Naive thymus-derived CD4-positive, alpha-beta T cell (primary cell): ENCODE measurements at regions of chr14 and their contacts with region 1.

Region 1: GRCh38 chr14:24215495-24216344 is at the start of gene MDP1:
- DNase-seq: peak; percentile 75 to 89 (median 84)
- ATAC-seq: peak; percentile 85
- H3K4me3 ChIP-seq: peak within 1 kb of the TSS; percentile 95
- H3K4me3 Mint-ChIP-seq: peak within 1 kb of the TSS; percentile 89 to 97 (median 95)
- H3K27ac ChIP-seq: peak within 1 kb of the TSS; percentile 91
- H3K27ac Mint-ChIP-seq: peak within 1 kb of the TSS; percentile 80 to 99 (median 96)
- H3K4me1 ChIP-seq: peaks cover 31 to 36% of the 10 kb centered on the region in 2 donors
- H3K4me1 Mint-ChIP-seq: peaks cover 29 to 62% (median 54%) of the 10 kb centered on the region in 7 donors
- H3K27me3 ChIP-seq: no peaks in the 10 kb centered on the region
- H3K27me3 Mint-ChIP-seq: peaks cover 0 to 2% (median 0%) of the 10 kb centered on the region in 5 donors
- total RNA-seq, gene MDP1: 5.5 to 18.5 (median 14.2) TPM

Region 2: GRCh38 chr14:23555882-23556699 is 659.6 kb before region 1 on chr14 and contains the start of gene THTPA:
- CTCF ChIA-PET with region 1: no interaction called
- POLR2A ChIA-PET with region 1: no interaction called
- intact Hi-C with region 1: loop called in 1 of 2 experiments (anchors 5 kb)
- DNase-seq: peak; percentile 84 to 96 (median 89)
- ATAC-seq: peak; percentile 94
- H3K4me3 ChIP-seq: peak within 1 kb of the TSS; percentile 84
- H3K4me3 Mint-ChIP-seq: peak within 1 kb of the TSS; percentile 80 to 99 (median 96)
- H3K27ac ChIP-seq: peak within 1 kb of the TSS; percentile 83
- H3K27ac Mint-ChIP-seq: peak within 1 kb of the TSS; percentile 78 to 97 (median 94)
- H3K4me1 ChIP-seq: peaks cover 10 to 16% of the 10 kb centered on the region in 2 donors
- H3K4me1 Mint-ChIP-seq: peaks cover 18 to 45% (median 38%) of the 10 kb centered on the region in 7 donors
- H3K27me3 ChIP-seq: no peaks in the 10 kb centered on the region
- H3K27me3 Mint-ChIP-seq: peaks cover 0 to under 1% (median 0%) of the 10 kb centered on the region in 5 donors
- total RNA-seq, gene THTPA: 16.4 to 26.7 (median 19.2) TPM

Region 3: DNA sequence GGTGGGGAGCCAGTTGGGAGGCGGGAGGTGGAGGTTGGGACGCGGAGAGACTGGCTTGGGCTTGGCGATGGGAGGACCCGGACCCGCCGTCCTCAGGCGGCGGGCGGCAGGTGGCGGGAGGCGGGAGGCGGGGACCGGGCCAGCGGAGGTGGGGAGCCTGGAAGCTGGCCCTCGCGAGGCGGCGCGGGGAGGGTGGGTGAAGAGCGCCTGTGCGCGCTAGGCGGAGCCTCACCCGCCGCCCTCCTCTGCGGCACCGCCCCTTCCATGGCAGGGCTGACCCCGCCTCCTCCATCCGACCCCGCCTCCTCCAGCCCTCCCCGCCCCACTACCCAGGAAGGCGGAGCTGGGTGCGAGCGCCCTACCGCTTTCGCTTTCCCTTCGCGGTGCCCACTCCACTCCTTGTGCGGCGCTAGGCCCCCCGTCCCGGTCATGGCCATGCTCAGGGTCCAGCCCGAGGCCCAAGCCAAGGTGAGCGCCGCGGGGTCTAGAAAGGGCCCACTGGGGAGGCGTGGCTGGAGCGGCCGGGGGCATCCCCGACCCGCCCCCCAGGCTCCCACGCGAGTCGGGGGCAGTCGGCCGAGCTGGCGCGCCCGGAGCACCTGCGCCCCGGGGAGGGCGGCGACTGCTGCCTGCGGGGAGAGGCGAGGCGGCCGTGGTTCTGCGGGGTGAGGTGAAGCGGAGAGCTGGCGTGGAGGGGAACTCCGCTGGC is 79.7 kb before region 1 on chr14 and contains the start of gene PSME1:
- CTCF ChIA-PET with region 1: interaction called, 3 read pairs
- POLR2A ChIA-PET with region 1: interaction called, 9 read pairs
- intact Hi-C with region 1: loop called (anchors 1 kb)
- DNase-seq: peak; percentile 88 to 97 (median 92)
- ATAC-seq: peak; percentile 99
- H3K4me3 ChIP-seq: peak within 1 kb of the TSS; percentile 83
- H3K4me3 Mint-ChIP-seq: peak within 1 kb of the TSS; percentile 88 to 95 (median 92)
- H3K27ac ChIP-seq: peak within 1 kb of the TSS; percentile 97
- H3K27ac Mint-ChIP-seq: peak within 1 kb of the TSS; percentile 86 to 98 (median 93)
- H3K4me1 ChIP-seq: peaks cover 16 to 37% of the 10 kb centered on the region in 2 donors
- H3K4me1 Mint-ChIP-seq: peaks cover 48 to 71% (median 64%) of the 10 kb centered on the region in 7 donors
- H3K27me3 ChIP-seq: no peaks in the 10 kb centered on the region
- H3K27me3 Mint-ChIP-seq: no peaks in the 10 kb centered on the region
- total RNA-seq, gene PSME1: 189 to 583 (median 202) TPM

Region 4: GRCh38 chr14:24188251-24189058 is 27.3 kb before region 1 on chr14 and contains the start of gene IPO4:
- CTCF ChIA-PET with region 1: no interaction called
- POLR2A ChIA-PET with region 1: interaction called, 79 read pairs
- intact Hi-C with region 1: loop called (anchors 1 kb)
- DNase-seq: peak; percentile 75 to 97 (median 94)
- ATAC-seq: peak; percentile 97
- H3K4me3 ChIP-seq: peak within 1 kb of the TSS; percentile 89
- H3K4me3 Mint-ChIP-seq: peak within 1 kb of the TSS; percentile 89 to 96 (median 90)
- H3K27ac ChIP-seq: peak within 1 kb of the TSS; percentile 83
- H3K27ac Mint-ChIP-seq: peak within 1 kb of the TSS; percentile 82 to 96 (median 92)
- H3K4me1 ChIP-seq: peaks cover 15 to 16% of the 10 kb centered on the region in 2 donors
- H3K4me1 Mint-ChIP-seq: peaks cover 24 to 53% (median 47%) of the 10 kb centered on the region in 7 donors
- H3K27me3 ChIP-seq: no peaks in the 10 kb centered on the region
- H3K27me3 Mint-ChIP-seq: no peaks in the 10 kb centered on the region
- total RNA-seq, gene IPO4: 21.5 to 45.2 (median 42.2) TPM

Region 5: DNA sequence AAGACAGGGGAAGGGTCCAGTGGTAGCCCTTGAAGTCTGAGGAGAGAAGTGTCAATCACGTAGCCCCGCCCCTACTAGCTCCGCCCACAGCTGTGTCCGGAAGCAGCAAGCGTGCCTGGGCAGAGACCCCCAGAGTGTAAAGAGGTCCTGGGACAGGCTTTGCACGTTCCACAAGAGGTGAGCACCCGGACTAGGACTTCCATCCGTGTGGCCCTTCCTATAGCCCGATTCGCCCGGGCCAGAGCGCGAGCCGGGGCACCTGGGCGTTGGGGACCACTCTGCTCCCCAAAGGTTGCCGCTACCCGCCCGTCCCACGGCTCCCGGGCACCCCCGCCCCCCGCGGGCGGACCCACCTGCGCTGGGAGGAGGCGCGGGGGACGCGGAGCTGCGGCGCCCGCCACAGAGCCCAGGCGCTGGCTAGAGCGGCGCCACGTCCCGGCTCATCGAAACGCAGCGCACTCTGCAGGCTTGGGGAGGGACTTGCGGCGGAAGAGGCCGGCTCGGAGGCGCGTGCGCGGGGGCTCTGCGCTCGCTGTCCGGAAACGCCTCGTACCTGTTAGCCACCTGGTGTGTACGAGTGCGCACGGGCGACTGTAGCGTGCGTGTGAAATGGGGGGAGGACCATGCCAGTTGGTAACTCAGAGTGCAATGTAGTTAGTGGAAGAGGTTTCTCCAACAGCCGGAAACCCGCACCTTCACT is 55.6 kb after region 1 on chr14 and contains the start of gene RABGGTA:
- CTCF ChIA-PET with region 1: interaction called, 3 read pairs
- POLR2A ChIA-PET with region 1: interaction called, 25 read pairs
- intact Hi-C with region 1: loop called (anchors 1 kb)
- DNase-seq: peak; percentile 87 to 97 (median 96)
- ATAC-seq: peak; percentile 91
- H3K4me3 ChIP-seq: peak within 1 kb of the TSS; percentile 80
- H3K4me3 Mint-ChIP-seq: peak within 1 kb of the TSS; percentile 79 to 95 (median 92)
- H3K27ac ChIP-seq: peak within 1 kb of the TSS; percentile 98
- H3K27ac Mint-ChIP-seq: peak within 1 kb of the TSS; percentile 93 to 100 (median 98)
- H3K4me1 ChIP-seq: peaks cover 17 to 23% of the 10 kb centered on the region in 2 donors
- H3K4me1 Mint-ChIP-seq: peaks cover 30 to 52% (median 46%) of the 10 kb centered on the region in 7 donors
- H3K27me3 ChIP-seq: no peaks in the 10 kb centered on the region
- H3K27me3 Mint-ChIP-seq: no peaks in the 10 kb centered on the region
- total RNA-seq, gene RABGGTA: 49.7 to 76.5 (median 55.5) TPM

Region 6: DNA sequence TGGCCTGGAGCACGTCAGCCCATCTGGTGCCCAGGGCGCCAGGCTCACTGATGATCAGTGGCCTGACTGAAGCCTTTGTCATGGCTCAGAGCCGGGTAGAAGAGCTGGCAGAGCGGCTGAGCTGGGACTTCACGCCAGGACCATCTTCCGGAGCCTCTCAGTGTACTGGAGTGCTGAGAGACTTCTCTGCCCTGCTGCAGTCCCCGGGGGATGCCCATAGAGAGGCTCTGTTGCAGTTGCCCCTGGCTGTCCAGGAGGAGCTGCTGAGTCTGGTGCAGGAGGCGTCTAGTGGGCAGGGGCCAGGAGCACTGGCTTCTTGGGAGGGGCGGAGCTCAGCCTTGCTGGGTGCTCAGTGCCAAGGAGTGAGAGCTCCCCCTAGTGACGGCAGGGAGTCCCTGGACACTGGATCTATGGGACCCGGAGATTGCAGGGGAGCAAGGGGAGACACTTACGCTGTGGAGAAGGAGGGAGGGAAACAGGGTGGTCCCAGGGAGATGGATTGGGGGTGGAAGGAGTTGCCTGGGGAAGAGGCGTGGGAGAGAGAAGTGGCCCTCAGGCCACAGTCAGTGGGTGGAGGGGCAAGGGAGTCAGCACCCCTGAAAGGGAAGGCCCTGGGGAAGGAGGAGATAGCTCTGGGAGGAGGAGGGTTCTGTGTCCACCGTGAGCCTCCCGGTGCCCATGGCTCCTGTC is 216.0 kb after region 1 on chr14:
- CTCF ChIA-PET with region 1: no interaction called
- POLR2A ChIA-PET with region 1: interaction called, 18 read pairs
- intact Hi-C with region 1: loop called in 1 of 2 experiments (anchors 1 kb)
- DNase-seq: peak; percentile 76 to 91 (median 86)
- ATAC-seq: peak; percentile 77
- H3K4me3 ChIP-seq: peak overlapping the region; percentile 96
- H3K4me3 Mint-ChIP-seq: peak overlapping the region; percentile 82 to 96 (median 91)
- H3K27ac ChIP-seq: peak overlapping the region; percentile 99
- H3K27ac Mint-ChIP-seq: peak overlapping the region; percentile 51 to 97 (median 96)
- H3K4me1 ChIP-seq: peaks cover 24 to 41% of the 10 kb centered on the region in 2 donors
- H3K4me1 Mint-ChIP-seq: peaks cover 19 to 59% (median 53%) of the 10 kb centered on the region in 7 donors
- H3K27me3 ChIP-seq: no peaks in the 10 kb centered on the region
- H3K27me3 Mint-ChIP-seq: no peaks in the 10 kb centered on the region